ENCODE measurements at regions of chr9 and their contacts with region 1.

Region 1: DNA sequence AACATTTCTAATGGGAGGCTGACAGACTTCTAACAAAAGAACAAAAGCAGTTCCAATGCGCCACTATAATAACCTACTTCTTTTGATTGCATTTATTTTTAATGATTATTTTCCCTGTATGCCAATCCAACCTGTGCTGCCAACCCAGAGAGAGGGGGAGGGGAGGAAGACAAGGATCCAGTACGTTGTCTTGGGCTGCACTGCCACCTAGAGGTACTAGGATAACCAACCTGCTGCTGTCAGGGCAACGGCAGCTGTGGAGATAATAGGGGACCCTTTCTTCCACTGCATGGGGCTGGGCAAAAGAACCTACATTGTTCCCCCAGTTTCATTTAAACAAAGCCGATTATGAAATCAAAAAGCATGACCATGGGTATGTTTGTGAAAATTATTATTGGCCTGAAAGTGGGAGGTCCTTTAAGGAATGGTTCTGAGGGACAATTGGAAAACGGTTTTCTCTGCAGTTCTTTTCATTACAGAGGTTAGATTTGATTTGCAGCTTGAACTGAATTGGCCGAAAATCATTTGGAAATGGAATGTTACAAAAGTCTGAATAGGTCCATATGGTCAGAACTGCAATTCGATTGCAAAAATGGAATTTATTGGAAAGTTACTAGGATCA is 101.3 kb downstream of the RASEF start:
- DNase-seq: peak; percentile 74
- H3K4me3 ChIP-seq: no peak overlapping the region; a peak in 1 of 4 replicates
- H3K27ac ChIP-seq: no peak overlapping the region; a peak in 1 of 4 replicates
- H3K4me1 ChIP-seq: peaks cover 0 to 8% of the 10 kb centered on the region in 2 experiments; a peak in 2 of 4 replicates
- H3K27me3 ChIP-seq: no peaks in the 10 kb centered on the region; the same call in 1 of the 2 replicates
- CTCF ChIP-seq: peak; percentile 87
- EP300 ChIP-seq: no peak
- RAD21 ChIP-seq: peak; percentile 97

Region 2: GRCh38 chr9:82923448-82924249 is 38.0 kb before region 1 on chr9:
- CTCF ChIA-PET with region 1: interaction called, 10 read pairs
- POLR2A ChIA-PET with region 1: no interaction called
- DNase-seq: no peak
- H3K4me3 ChIP-seq: no peak overlapping the region
- H3K27ac ChIP-seq: no peak overlapping the region
- H3K4me1 ChIP-seq: peaks cover 0 to 6% of the 10 kb centered on the region in 2 experiments; a peak in 1 of 4 replicates
- H3K27me3 ChIP-seq: no peaks in the 10 kb centered on the region
- CTCF ChIP-seq: no peak
- EP300 ChIP-seq: no peak
- RAD21 ChIP-seq: no peak

Region 3: DNA sequence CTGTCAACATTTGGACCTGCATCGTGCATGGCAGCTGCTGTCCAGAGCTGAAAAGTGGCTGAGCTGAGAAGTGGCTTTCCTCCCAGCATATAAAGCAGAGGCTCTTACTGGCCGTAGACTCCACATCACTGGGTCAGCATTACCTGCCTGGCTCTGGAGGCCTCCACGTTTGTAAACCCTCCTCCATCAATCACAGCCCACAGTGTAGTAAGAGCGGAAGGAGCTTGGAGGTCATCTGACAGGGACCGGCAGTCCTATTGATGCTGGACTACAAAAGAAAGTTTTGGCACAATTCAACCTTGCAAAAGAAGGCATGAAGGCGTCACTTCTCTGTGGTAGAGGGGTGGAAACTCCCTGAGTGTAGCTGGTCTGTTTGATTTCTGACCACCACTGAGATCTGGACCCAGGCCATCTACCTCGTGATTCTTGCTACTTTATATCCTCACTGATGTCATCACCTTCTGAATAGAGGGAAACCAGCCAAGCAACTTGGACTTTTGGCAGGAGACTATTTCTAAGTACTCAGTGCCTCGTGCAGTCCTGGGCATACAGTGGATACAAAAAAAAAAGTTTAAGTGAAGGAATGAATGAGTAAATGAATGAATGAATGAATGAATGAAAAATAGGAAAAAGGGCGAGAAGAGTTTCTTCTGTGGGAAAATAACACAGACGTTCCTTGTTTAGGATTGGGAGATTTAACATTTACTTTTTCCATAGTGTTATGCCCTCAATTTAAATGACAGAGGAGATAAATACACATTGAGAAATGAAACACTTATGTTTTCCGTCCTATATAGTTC is 86.6 kb after region 1 on chr9:
- CTCF ChIA-PET with region 1: no interaction called
- POLR2A ChIA-PET with region 1: no interaction called
- DNase-seq: no peak
- H3K4me3 ChIP-seq: no peak overlapping the region
- H3K27ac ChIP-seq: no peak overlapping the region
- H3K4me1 ChIP-seq: peaks cover 0 to 15% of the 10 kb centered on the region in 2 experiments; a peak in 2 of 4 replicates
- H3K27me3 ChIP-seq: no peaks in the 10 kb centered on the region; the same call in 1 of the 2 replicates
- CTCF ChIP-seq: no peak
- EP300 ChIP-seq: no peak
- RAD21 ChIP-seq: no peak

Measured in SK-N-SH (cell line).